ENCODE measurements at regions of chrX and their contacts with region 1.

Region 1: DNA sequence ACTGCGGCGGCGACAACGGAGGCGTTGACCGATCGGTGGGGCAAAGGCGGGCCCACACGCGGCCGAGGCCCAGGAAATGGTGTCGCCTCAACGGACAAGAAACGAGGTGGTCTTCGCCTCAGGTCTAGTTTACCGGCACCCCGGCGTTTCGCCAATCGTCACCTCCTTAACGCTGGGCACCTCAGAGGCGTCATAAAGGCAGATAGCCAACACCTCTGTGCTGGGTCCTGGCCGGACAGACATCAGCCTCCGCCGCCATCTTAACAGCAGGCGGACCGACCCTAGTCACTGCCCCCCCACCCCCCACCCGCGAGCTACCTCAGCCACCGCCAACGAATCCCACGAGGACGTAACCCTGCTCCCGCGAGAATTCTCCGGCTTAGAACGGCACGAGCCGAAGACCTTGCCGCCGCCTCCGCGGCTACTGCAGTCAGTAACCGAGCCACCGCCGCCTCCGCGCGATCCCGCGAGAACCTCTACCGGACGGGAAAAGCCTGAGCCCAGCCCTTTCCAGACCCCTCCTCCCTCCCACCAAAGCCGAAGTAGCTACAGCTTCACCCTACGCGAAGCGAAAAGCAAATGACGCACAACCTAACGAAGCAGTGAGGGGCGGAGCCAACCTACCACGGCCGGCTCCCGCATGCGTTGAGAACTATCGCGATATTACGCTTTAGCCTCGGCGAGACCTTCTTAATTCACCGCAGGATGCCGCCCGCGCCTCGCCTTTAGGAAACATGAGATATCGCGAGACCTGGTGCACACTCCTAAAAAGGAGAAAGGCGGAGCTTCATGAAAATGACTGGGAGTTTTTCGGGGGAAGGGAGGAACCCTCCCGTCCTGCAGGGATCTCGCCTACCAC is 2.7 kb downstream of the HUWE1 start:
- DNase-seq: peak; percentile 96
- H3K4me3 ChIP-seq: peak overlapping the region; percentile 37 to 76 (median 48)
- H3K27ac ChIP-seq: peak overlapping the region; percentile 79
- H3K4me1 ChIP-seq: no peaks in the 10 kb centered on the region
- H3K27me3 ChIP-seq: no peaks in the 10 kb centered on the region
- CTCF ChIP-seq: no peak

Region 2: DNA sequence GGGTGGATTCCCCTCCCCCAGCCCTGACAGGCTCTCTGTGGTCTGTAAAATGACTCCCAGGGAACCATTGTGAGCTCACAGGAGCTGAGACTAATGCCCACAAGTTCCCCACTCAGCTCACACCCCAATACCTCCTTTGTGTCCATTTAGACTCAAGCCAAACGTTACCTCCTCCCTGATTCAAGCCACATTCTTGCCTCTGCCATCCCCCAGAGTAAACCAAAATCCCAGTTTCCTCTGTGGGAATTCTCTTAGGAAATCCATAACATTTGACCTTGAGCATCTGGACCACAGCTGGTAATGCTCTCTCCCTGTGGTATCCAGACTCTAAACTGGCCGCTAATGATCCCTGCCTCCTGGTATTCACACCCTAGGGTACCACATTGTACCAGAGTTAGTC is 432.5 kb before region 1 on chrX:
- CTCF ChIA-PET with region 1: no interaction called
- dilution Hi-C with region 1: no loop called
- in situ Hi-C with region 1: no loop called
- intact Hi-C with region 1: no loop called
- DNase-seq: no peak
- H3K4me3 ChIP-seq: no peak overlapping the region
- H3K27ac ChIP-seq: no peak overlapping the region
- H3K4me1 ChIP-seq: no peaks in the 10 kb centered on the region
- H3K27me3 ChIP-seq: no peaks in the 10 kb centered on the region
- CTCF ChIP-seq: no peak

Region 3: GRCh38 chrX:53714580-53715345 is 31.0 kb after region 1 on chrX:
- CTCF ChIA-PET with region 1: no interaction called
- dilution Hi-C with region 1: no loop called
- in situ Hi-C with region 1: no loop called
- intact Hi-C with region 1: loop called (anchors 2 kb)
- DNase-seq: peak; percentile 69
- H3K4me3 ChIP-seq: no peak overlapping the region
- H3K27ac ChIP-seq: peak overlapping the region; percentile 22
- H3K4me1 ChIP-seq: peaks cover 40% of the 10 kb centered on the region
- H3K27me3 ChIP-seq: no peaks in the 10 kb centered on the region
- CTCF ChIP-seq: peak in 1 of 2 donors; percentile 12

Region 4: GRCh38 chrX:53729751-53730150 is 46.0 kb after region 1 on chrX:
- CTCF ChIA-PET with region 1: no interaction called
- dilution Hi-C with region 1: no loop called
- in situ Hi-C with region 1: no loop called
- intact Hi-C with region 1: loop called (anchors 1 kb)
- DNase-seq: no peak
- H3K4me3 ChIP-seq: no peak overlapping the region
- H3K27ac ChIP-seq: no peak overlapping the region
- H3K4me1 ChIP-seq: peaks cover 4% of the 10 kb centered on the region
- H3K27me3 ChIP-seq: no peaks in the 10 kb centered on the region
- CTCF ChIP-seq: no peak

Region 5: DNA sequence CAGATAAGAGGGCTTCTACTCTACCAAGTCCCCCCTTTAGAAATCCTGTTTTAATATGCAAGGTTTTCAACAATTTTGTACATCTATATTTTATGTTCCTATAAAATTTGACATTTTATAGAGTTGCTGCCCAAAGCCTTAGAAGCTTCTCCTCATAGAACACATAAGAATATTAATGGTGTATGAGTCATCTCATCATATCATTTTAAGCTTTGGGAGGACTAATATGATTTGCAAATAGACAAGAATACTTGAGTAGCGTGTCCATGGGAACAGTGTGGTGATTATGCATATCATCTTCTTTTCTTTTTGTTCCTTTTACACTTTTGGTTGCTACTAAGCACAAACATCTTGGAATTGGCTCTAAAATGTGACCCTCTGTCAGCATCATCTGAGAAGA is 59.5 kb after region 1 on chrX:
- CTCF ChIA-PET with region 1: no interaction called
- dilution Hi-C with region 1: no loop called
- in situ Hi-C with region 1: no loop called
- intact Hi-C with region 1: no loop called
- DNase-seq: no peak
- H3K4me3 ChIP-seq: no peak overlapping the region
- H3K27ac ChIP-seq: no peak overlapping the region
- H3K4me1 ChIP-seq: no peaks in the 10 kb centered on the region
- H3K27me3 ChIP-seq: no peaks in the 10 kb centered on the region
- CTCF ChIP-seq: no peak

Region 6: GRCh38 chrX:53824676-53825075 is 140.9 kb after region 1 on chrX:
- CTCF ChIA-PET with region 1: no interaction called
- dilution Hi-C with region 1: no loop called
- in situ Hi-C with region 1: loop called in 1 of 2 experiments (anchors 10 kb)
- intact Hi-C with region 1: no loop called
- DNase-seq: no peak
- H3K4me3 ChIP-seq: no peak overlapping the region
- H3K27ac ChIP-seq: no peak overlapping the region
- H3K4me1 ChIP-seq: no peaks in the 10 kb centered on the region
- H3K27me3 ChIP-seq: no peaks in the 10 kb centered on the region
- CTCF ChIP-seq: no peak

Region 7: GRCh38 chrX:53831662-53832635 is 148.2 kb after region 1 on chrX:
- CTCF ChIA-PET with region 1: no interaction called
- dilution Hi-C with region 1: no loop called
- in situ Hi-C with region 1: loop called (anchors 10 kb)
- intact Hi-C with region 1: loop called (anchors 1 kb)
- DNase-seq: peak; percentile 41
- H3K4me3 ChIP-seq: no peak overlapping the region
- H3K27ac ChIP-seq: no peak overlapping the region
- H3K4me1 ChIP-seq: no peaks in the 10 kb centered on the region
- H3K27me3 ChIP-seq: no peaks in the 10 kb centered on the region
- CTCF ChIP-seq: peak; percentile 59 to 66

Region 8: GRCh38 chrX:54044126-54044876 is 360.5 kb after region 1 on chrX and contains the start of gene PHF8:
- CTCF ChIA-PET with region 1: no interaction called
- dilution Hi-C with region 1: no loop called
- in situ Hi-C with region 1: no loop called
- intact Hi-C with region 1: loop called (anchors 5 kb)
- DNase-seq: peak; percentile 94
- H3K4me3 ChIP-seq: peak within 1 kb of the TSS; percentile 59 to 69 (median 63)
- H3K27ac ChIP-seq: peak within 1 kb of the TSS; percentile 73
- H3K4me1 ChIP-seq: peaks cover 8% of the 10 kb centered on the region
- H3K27me3 ChIP-seq: no peaks in the 10 kb centered on the region
- CTCF ChIP-seq: no peak
- total RNA-seq, gene PHF8: 16.0 to 23.8 TPM

Region 9: DNA sequence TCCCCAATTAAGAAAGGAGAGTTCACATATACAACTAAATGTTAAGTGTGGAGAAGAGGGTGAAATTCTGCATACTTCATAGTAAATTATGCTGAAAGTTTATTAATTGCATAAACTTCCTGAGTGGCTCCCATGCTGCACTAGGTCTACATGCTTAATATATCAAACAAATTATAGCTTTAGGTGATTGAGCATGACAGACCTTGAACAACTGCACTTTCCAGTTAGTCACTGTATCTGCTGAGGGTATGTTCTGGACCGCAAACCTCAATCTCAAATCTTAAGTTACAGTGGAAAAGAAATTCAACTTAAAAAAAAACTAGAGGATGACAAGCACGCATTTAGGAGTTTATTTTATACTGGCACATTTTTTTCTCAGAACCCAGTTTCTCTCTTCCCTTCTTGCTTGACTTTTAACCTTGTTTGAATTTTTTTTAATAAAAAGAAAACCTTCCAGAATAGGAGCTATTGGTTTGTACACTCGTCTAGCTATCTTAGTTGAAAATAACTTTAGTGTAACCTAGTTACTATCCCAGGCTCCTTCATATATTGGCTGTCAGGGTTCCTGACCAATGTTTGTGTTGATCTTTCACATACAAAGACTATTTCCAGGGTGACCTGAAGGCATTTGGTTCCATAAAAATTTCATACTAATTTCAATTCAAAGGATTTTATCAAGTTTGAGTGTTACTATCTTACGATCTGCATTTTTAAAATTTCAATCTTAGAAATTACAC is 509.5 kb after region 1 on chrX:
- CTCF ChIA-PET with region 1: no interaction called
- dilution Hi-C with region 1: no loop called
- in situ Hi-C with region 1: no loop called
- intact Hi-C with region 1: no loop called
- DNase-seq: no peak
- H3K4me3 ChIP-seq: no peak overlapping the region
- H3K27ac ChIP-seq: no peak overlapping the region
- H3K4me1 ChIP-seq: no peaks in the 10 kb centered on the region
- H3K27me3 ChIP-seq: no peaks in the 10 kb centered on the region
- CTCF ChIP-seq: no peak

Measured in mammary epithelial cell (primary cell).